ENCODE measurements at regions of chr4 and their contacts with region 1.

Region 1: GRCh38 chr4:139177868-139178611 is 1.0 kb upstream of the ELF2 start:
- DNase-seq: peak; percentile 98
- H3K4me3 Mint-ChIP-seq: peak overlapping the region; percentile 90
- H3K27ac Mint-ChIP-seq: peak overlapping the region; percentile 93
- H3K4me1 Mint-ChIP-seq: peaks cover 24% of the 10 kb centered on the region
- H3K27me3 Mint-ChIP-seq: peaks cover 33% of the 10 kb centered on the region

Region 2: DNA sequence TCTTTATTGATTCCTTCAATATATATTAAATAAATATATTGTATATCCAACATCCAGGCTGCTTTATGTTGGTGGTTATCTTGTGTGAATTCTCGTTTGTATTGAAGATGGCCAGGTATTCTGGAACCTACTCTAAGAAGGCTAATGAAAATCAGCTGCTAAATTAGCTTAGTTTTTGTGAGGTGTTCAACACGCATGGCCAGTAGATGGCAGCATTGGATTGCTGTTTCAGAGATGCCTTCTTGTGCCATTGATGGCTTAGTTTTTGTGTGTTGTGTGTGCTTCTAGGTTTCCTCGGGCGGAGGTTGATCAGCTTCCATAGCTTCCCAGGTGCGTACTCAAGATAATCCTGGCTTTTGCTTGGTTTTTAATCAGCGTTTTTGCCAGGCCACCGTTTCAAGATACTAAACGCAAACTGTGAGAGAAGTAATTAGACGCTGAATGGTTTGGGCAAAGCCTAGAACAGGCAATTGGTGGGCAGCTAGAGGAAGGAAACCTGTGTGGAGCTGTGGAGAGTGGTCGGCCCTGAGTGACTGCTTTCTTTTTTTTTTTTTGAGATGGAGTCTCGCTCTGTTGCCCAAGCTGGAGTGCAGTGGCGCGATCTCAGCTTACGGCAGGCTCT is 147.3 kb before region 1 on chr4:
- intact Hi-C with region 1: loop called (anchors 2 kb)
- DNase-seq: peak; percentile 58
- H3K4me3 Mint-ChIP-seq: no peak overlapping the region
- H3K27ac Mint-ChIP-seq: no peak overlapping the region
- H3K4me1 Mint-ChIP-seq: peaks cover 16% of the 10 kb centered on the region
- H3K27me3 Mint-ChIP-seq: no peaks in the 10 kb centered on the region

Region 3: DNA sequence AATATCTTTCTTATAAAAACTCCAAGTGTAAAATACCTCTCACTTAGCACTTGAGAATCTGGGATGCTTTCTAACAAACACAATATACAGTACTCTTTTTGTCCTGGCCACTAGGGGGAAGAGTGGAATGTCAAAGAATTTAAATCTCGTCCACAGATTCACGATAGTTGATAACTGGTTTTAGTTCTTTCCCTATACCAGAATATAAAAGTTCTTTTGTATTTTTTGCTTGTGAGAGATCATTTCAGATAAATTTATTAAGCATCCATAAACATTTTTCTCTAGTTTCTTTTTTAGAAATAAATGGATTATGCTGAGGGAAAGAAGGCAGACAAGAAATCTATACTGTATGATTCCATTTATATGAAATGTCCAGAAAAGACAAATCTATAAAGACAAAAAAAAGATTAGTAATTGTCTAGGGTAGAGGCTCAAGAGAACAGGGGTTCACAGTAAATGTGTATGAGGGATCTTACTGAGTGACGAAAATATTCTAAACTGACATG is 51.5 kb after region 1 on chr4:
- intact Hi-C with region 1: loop called (anchors 2 kb)
- DNase-seq: no peak
- H3K4me3 Mint-ChIP-seq: no peak overlapping the region
- H3K27ac Mint-ChIP-seq: no peak overlapping the region
- H3K4me1 Mint-ChIP-seq: peaks cover 3% of the 10 kb centered on the region
- H3K27me3 Mint-ChIP-seq: no peaks in the 10 kb centered on the region

Region 4: DNA sequence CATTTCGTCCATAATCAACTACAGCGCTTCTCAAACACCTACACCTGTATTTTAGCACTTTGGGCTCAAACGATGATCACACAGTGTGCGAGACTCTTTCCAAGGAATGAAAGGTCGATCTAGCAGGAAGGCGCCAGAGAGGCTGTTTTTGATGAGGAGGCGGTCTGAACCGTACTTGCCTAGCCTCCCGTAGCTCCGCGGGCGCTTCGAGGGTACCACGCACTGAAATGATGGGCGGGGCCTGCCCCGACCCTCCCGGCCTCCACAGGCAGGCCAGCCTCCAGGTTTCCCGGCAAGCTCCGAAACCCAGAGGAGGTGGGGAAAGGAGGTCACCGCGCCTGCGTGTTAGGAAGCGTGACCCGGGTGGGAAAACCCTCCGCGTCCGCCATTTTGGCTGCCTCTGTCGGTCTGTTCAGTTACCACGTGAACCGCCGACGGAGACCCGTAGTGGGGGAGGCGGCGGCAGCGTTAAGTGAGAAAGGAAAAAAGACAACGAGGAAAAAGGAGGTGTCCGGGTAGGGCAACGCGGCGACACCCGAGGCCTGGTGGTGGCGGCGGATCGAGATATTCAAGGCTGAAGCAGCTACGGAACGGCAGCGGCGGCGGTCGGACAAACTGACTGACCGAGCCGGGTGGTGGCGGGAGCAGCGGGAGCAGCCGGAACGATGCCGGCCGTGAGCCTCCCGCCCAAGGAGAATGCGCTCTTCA is 123.2 kb after region 1 on chr4 and contains the start of gene NAA15:
- intact Hi-C with region 1: loop called (anchors 1 kb)
- DNase-seq: peak; percentile 98
- H3K4me3 Mint-ChIP-seq: peak within 1 kb of the TSS; percentile 98
- H3K27ac Mint-ChIP-seq: peak within 1 kb of the TSS; percentile 99
- H3K4me1 Mint-ChIP-seq: peaks cover 48% of the 10 kb centered on the region
- H3K27me3 Mint-ChIP-seq: no peaks in the 10 kb centered on the region
- total RNA-seq, gene NAA15: 86.7 and 97.4 TPM in 2 replicates

Region 5: GRCh38 chr4:139656614-139657486 is 478.8 kb after region 1 on chr4:
- intact Hi-C with region 1: loop called (anchors 5 kb)
- DNase-seq: peak; percentile 36
- H3K4me3 Mint-ChIP-seq: peak overlapping the region; percentile 77
- H3K27ac Mint-ChIP-seq: peak overlapping the region; percentile 93
- H3K4me1 Mint-ChIP-seq: peaks cover 27% of the 10 kb centered on the region
- H3K27me3 Mint-ChIP-seq: no peaks in the 10 kb centered on the region